ENCODE measurements at regions of chr9 and their contacts with region 1.

Region 1: DNA sequence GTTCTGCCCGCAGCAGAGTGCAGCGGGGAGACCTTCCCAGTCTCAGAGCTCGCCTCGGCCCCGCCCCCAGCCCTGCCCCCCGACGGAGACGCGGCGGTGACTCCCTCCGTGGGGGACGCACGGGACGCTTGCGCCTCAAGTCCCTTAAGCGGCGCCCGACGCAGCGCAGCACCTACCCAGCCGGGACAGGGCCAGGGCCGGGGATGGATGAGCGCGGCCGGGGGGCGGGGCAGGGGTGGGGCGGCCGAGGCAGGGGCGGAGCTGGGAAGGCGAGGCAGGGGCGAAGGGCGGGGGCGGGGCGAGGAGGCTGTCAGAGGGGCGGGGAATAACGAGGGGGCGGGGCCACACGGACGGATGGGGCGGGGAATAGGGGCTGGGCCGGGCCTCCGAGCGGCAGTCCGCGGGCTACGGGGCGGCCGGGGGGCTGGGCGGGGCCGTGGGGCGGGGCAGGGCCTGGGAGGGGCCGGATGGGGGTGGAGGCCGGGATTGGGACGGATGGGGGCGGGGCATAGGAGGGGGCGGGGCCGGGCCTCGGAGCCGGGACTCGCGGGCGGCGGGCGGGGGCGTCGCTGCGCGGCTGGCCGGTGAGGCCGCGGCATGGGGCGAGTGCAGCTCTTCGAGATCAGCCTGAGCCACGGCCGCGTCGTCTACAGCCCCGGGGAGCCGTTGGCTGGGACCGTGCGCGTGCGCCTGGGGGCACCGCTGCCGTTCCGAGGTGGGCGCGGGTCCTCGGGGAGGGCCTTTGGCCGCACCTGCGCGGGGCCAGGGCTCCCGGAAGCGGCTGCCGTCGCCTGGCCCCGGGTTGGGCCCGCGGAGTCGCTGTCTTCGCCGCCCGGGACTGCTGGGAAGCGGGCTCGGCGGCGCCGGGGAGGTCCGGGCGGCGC is at the start of gene ARRDC1:
- DNase-seq: peak; percentile 93
- H3K4me3 Mint-ChIP-seq: peak within 1 kb of the TSS; percentile 75
- H3K27ac Mint-ChIP-seq: no peak within 1 kb of the TSS
- H3K4me1 Mint-ChIP-seq: peaks cover 13% of the 10 kb centered on the region
- H3K27me3 Mint-ChIP-seq: no peaks in the 10 kb centered on the region
- total RNA-seq, gene ARRDC1: 19.1 to 21.4 TPM

Region 2: GRCh38 chr9:137453643-137454081 is 151.7 kb before region 1 on chr9:
- CTCF ChIA-PET with region 1: no interaction called
- intact Hi-C with region 1: loop called (anchors 1 kb)
- DNase-seq: peak; percentile 76
- H3K4me3 Mint-ChIP-seq: peak overlapping the region; percentile 18
- H3K27ac Mint-ChIP-seq: no peak overlapping the region
- H3K4me1 Mint-ChIP-seq: peaks cover 44% of the 10 kb centered on the region
- H3K27me3 Mint-ChIP-seq: no peaks in the 10 kb centered on the region

Region 3: GRCh38 chr9:137551651-137552384 is 53.5 kb before region 1 on chr9 and contains the start of gene MRPL41:
- CTCF ChIA-PET with region 1: no interaction called
- intact Hi-C with region 1: loop called (anchors 1 kb)
- DNase-seq: peak; percentile 86
- H3K4me3 Mint-ChIP-seq: peak within 1 kb of the TSS; percentile 79
- H3K27ac Mint-ChIP-seq: peak within 1 kb of the TSS; percentile 51
- H3K4me1 Mint-ChIP-seq: peaks cover 20% of the 10 kb centered on the region
- H3K27me3 Mint-ChIP-seq: no peaks in the 10 kb centered on the region
- total RNA-seq, gene MRPL41: 39.3 to 41.0 TPM

Region 4: GRCh38 chr9:137590462-137591383 is 14.6 kb before region 1 on chr9 and contains the start of gene ZMYND19:
- CTCF ChIA-PET with region 1: no interaction called
- intact Hi-C with region 1: loop called (anchors 1 kb)
- DNase-seq: peak; percentile 88
- H3K4me3 Mint-ChIP-seq: peak within 1 kb of the TSS; percentile 97
- H3K27ac Mint-ChIP-seq: peak within 1 kb of the TSS; percentile 89
- H3K4me1 Mint-ChIP-seq: peaks cover 21% of the 10 kb centered on the region
- H3K27me3 Mint-ChIP-seq: no peaks in the 10 kb centered on the region
- total RNA-seq, gene ZMYND19: 50.9 to 52.5 TPM

Region 5: GRCh38 chr9:137665697-137666510 is 60.5 kb after region 1 on chr9:
- CTCF ChIA-PET with region 1: no interaction called
- intact Hi-C with region 1: no loop called
- DNase-seq: no peak
- H3K4me3 Mint-ChIP-seq: no peak overlapping the region
- H3K27ac Mint-ChIP-seq: no peak overlapping the region
- H3K4me1 Mint-ChIP-seq: peaks cover 32% of the 10 kb centered on the region
- H3K27me3 Mint-ChIP-seq: no peaks in the 10 kb centered on the region

Region 6: DNA sequence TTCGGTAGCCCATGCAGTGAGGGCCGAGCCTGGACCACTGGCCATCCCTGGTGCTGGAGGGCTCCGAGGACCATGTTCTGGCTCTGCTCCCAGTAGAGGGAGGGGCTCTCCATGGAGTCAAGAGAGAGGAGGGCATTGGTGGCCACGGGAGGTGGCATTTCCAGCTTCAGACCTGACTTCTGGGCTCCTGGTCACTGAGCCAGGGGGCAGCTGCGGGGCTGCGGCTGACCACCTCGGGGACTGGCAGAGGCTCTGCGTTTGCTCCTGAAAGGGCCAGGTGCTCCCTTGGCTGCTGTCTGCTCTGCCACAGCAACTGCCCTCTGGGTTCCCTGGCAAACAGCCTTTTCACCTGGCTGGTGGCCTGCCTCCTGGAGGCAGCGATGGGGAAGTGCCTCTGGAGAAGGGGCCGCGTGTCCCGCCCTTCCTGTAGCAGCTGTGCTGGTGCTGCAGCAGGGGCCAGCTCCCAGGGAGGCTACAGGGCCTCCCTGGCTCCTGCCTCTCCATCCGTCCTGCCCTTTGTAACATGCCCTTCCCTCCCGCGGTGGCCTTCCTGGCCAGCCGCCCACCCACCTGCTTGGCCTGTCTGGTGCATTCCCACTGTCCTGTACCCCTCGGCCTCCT is 416.9 kb after region 1 on chr9:
- CTCF ChIA-PET with region 1: no interaction called
- intact Hi-C with region 1: no loop called
- DNase-seq: peak; percentile 42
- H3K4me3 Mint-ChIP-seq: no peak overlapping the region
- H3K27ac Mint-ChIP-seq: no peak overlapping the region
- H3K4me1 Mint-ChIP-seq: peaks cover 4% of the 10 kb centered on the region
- H3K27me3 Mint-ChIP-seq: peaks cover 14% of the 10 kb centered on the region

Measured in activated naive CD4-positive, alpha-beta T cell treated with anti-CD3 and anti-CD28 coated beads for 36 hours (primary cell).